ENCODE measurements at regions of chr12 and their contacts with region 1.

Region 1: GRCh38 chr12:48957141-48958048 is at the start of gene ARF3:
- DNase-seq: peak; percentile 75 to 96
- H3K4me3 ChIP-seq: peak within 1 kb of the TSS; percentile 72 to 95
- H3K27ac ChIP-seq: peak within 1 kb of the TSS; percentile 81 to 84
- H3K4me1 ChIP-seq: peaks cover 0 to 18% of the 10 kb centered on the region in 2 donors
- H3K27me3 ChIP-seq: no peaks in the 10 kb centered on the region
- CTCF ChIP-seq: no peak
- total RNA-seq, gene ARF3: 68.4 TPM

Region 2: GRCh38 chr12:48758221-48758620 is 199.2 kb before region 1 on chr12:
- intact Hi-C with region 1: no loop called
- DNase-seq: no peak
- H3K4me3 ChIP-seq: no peak overlapping the region
- H3K27ac ChIP-seq: no peak overlapping the region
- H3K4me1 ChIP-seq: no peaks in the 10 kb centered on the region
- H3K27me3 ChIP-seq: no peaks in the 10 kb centered on the region
- CTCF ChIP-seq: no peak

Region 3: DNA sequence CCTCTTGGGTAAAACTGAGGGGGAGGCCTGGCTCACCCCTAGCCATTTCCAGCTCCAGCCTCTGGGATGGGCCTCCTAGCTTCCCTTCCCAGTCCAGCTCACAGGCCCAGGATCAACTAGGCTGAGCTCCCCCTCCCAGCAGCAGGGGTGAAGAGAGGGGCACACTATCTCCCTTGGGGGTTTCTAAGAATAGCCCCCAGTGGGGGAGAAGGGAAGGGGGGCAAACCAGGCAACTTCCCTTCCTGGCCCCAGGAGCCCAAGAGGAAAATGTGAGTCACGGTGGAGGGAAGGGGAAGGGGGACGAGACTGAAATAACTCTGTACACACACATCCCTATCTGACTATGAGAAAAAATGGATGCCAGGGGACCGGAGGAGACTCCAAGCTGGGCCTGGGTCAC is 177.5 kb before region 1 on chr12:
- intact Hi-C with region 1: loop called (anchors 2 kb)
- DNase-seq: peak; percentile 70 to 94
- H3K4me3 ChIP-seq: peak overlapping the region; percentile 30 to 42
- H3K27ac ChIP-seq: peak overlapping the region; percentile 89 to 93
- H3K4me1 ChIP-seq: peaks cover 25 to 41% of the 10 kb centered on the region in 2 donors
- H3K27me3 ChIP-seq: no peaks in the 10 kb centered on the region
- CTCF ChIP-seq: no peak

Region 4: DNA sequence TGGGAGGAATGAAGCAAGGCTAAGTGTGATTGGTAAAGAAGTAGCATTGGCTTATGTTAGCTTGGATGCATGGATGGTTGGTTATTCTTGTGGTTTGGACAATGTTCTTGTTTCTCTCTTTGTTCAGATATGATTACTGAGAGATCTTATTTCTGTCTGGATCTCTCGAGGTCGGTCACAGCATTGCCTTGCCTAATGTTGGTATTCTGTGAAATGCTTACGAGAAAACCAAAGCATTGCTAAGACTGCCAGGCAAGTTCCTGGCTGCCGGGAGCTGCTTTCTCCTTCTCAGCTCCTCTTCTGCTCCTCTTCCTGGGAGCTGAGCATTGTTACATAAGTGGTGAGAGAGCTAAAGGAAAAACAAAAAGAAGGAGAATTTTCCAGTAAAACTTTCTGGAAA is 84.3 kb before region 1 on chr12:
- intact Hi-C with region 1: no loop called
- DNase-seq: no peak
- H3K4me3 ChIP-seq: no peak overlapping the region
- H3K27ac ChIP-seq: no peak overlapping the region
- H3K4me1 ChIP-seq: no peaks in the 10 kb centered on the region
- H3K27me3 ChIP-seq: no peaks in the 10 kb centered on the region
- CTCF ChIP-seq: no peak

Region 5: GRCh38 chr12:49342066-49342913 is 384.9 kb after region 1 on chr12:
- intact Hi-C with region 1: no loop called
- DNase-seq: peak in 1 of 2 donors; percentile 79
- H3K4me3 ChIP-seq: peak overlapping the region; percentile 24 to 63
- H3K27ac ChIP-seq: no peak overlapping the region
- H3K4me1 ChIP-seq: peaks cover 32 to 40% of the 10 kb centered on the region in 2 donors
- H3K27me3 ChIP-seq: peaks cover 14% of the 10 kb centered on the region
- CTCF ChIP-seq: peak; percentile 51 to 87 (median 83)